Endothelial cell of umbilical vein (primary cell): ENCODE measurements at regions of chr19 and their contacts with region 1.

Region 1: DNA sequence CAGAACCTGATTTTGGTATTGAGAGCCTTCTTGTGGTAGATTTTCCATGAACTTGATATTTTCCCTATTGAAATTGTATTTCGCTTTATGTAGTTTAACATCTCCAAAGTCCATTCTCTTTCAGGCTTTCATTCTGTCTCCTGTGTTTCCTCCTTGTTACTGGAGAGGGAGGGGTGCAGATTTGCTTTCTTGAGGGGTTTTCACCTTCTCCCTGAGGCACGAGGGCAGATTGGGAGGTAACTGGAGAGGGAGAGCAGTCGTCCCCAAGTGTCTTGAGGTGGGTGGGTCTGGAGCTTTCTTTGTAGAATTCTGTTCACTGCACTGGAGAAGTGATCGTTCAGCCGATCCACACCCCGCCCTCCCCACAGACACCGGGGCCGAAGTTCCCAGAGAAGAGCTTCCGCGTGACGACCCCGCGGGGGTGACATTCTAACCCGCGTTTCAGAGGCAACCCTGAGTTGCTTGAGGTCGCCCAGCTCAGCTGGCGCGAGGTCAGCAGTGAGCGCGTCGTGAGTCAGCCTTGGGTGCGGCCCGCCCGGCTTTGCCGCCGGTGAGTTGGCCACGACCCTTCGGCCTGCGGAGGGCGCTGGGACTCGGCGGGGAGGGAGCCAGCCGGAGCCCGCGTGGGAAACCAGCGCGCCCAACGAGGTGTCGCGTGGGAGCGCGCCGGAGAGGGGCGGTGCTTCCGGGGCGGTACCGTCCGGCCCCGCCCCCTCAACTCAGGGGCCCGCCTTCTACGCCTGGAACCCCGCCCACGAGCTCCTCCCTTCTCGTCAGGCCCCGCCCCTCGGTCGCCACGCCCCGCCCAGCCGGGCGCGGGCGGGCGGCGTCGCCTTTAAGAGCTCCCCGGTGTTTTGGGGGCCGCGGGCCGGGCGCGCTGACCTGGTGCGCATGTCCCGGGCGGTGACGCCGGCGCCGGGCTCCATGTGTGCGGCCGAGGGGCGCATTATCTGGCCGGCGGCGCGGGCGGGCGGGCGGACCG is at the start of gene GATAD2A:
- DNase-seq: peak; percentile 88
- H3K4me3 ChIP-seq: peak within 1 kb of the TSS; percentile 79 to 85 (median 84)
- H3K27ac ChIP-seq: peak within 1 kb of the TSS; percentile 63
- H3K4me1 ChIP-seq: peaks cover 11% of the 10 kb centered on the region
- H3K27me3 ChIP-seq: no peaks in the 10 kb centered on the region
- CTCF ChIP-seq: peak; percentile 17 to 20
- POLR2A ChIP-seq: peak; percentile 51
- total RNA-seq, gene GATAD2A: 134 and 138 TPM in 2 replicates

Region 2: DNA sequence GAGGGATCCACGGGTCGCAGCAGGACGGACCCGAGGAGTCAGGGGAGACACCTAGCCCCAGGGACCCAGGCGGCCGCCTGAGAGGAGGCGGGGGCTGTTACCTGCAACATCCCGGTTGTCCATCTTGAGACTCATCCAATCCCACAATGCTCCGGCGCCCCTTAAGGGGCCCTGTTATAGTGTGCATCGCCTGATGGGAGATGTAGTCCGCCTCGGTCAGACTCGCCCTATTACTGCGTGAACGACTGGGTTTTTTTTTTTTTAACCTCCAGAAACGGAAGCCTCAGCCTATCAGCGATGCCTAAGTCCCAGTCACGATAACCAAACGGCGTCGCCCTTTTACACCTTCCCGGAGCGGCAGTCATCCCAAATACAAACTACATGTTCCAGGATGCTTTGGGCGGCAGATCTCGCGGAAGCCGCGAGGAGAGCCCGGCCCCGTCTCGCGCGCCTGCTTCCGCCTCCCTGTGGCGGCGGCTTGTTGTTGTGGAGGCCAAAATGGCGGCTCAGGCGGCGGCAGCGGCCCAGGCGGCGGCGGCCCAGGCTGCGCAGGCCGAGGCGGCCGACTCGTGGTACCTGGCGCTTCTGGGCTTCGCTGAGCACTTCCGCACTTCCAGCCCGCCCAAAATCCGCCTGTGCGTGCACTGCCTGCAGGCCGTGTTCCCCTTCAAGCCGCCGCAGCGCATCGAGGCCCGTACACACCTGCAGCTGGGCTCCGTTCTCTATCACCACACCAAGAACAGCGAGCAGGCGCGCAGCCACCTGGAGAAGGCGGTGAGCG is 84.6 kb before region 1 on chr19 and contains the starts of genes MAU2 and SUGP1:
- CTCF ChIA-PET with region 1: no interaction called
- POLR2A ChIA-PET with region 1: no interaction called
- dilution Hi-C with region 1: no loop called
- intact Hi-C with region 1: loop called (anchors 1 kb)
- DNase-seq: peak; percentile 89
- H3K4me3 ChIP-seq: peak within 1 kb of the TSS; percentile 69 to 90 (median 83)
- H3K27ac ChIP-seq: peak within 1 kb of the TSS; percentile 94
- H3K4me1 ChIP-seq: peaks cover 13% of the 10 kb centered on the region
- H3K27me3 ChIP-seq: no peaks in the 10 kb centered on the region
- CTCF ChIP-seq: no peak
- POLR2A ChIP-seq: peak; percentile 78
- total RNA-seq, gene MAU2: 57.3 and 70.0 TPM in 2 replicates
- total RNA-seq, gene SUGP1: 59.9 and 64.7 TPM in 2 replicates

Region 3: GRCh38 chr19:19361075-19361594 is 44.0 kb before region 1 on chr19:
- CTCF ChIA-PET with region 1: interaction called, 24 read pairs
- POLR2A ChIA-PET with region 1: interaction called, 3 read pairs
- dilution Hi-C with region 1: no loop called
- intact Hi-C with region 1: no loop called
- DNase-seq: peak; percentile 85
- H3K4me3 ChIP-seq: no peak overlapping the region
- H3K27ac ChIP-seq: no peak overlapping the region
- H3K4me1 ChIP-seq: peaks cover 8% of the 10 kb centered on the region
- H3K27me3 ChIP-seq: no peaks in the 10 kb centered on the region
- CTCF ChIP-seq: peak; percentile 76 to 77
- POLR2A ChIP-seq: no peak

Region 4: DNA sequence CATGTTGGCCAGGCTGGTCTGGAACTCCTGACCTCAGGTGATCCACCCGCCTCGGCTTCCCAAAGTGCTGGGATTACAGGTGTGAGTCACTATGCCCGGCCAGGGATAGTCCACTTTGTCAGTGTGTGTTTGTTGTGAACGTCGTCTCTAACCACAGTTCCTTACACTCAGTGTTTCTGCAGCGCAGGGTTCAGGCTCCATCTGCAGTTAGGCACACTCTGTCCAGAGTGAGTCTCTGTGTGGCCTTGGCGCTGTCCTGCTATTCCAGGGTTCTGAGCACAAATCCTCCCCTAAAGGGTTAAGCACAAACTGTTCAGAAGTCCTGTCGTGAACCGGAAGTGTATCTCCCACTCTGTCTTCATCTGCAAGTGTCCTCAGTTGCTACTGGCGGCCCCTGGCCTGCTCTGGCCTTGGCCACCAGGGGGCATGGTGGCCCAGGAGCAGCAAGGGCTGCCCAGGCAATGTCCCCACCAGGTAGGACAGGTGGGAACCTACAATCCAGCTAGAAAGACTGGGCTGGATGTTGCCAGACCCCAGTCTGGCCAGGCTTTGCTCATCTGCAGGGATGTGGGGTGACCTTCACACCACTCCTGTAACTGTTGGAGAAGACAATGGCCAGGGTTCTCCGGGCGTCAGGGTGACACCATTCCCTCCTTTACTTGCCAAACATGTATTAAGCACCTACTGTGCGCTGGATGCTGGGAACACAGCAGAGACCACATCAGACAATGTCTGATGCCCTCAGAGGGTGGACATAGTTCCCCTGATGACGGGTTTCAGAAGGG is 38.4 kb before region 1 on chr19:
- CTCF ChIA-PET with region 1: interaction called, 24 read pairs
- POLR2A ChIA-PET with region 1: interaction called, 3 read pairs
- dilution Hi-C with region 1: no loop called
- intact Hi-C with region 1: loop called (anchors 1 kb)
- DNase-seq: peak; percentile 67
- H3K4me3 ChIP-seq: no peak overlapping the region
- H3K27ac ChIP-seq: no peak overlapping the region
- H3K4me1 ChIP-seq: peaks cover 8% of the 10 kb centered on the region
- H3K27me3 ChIP-seq: no peaks in the 10 kb centered on the region
- CTCF ChIP-seq: peak; percentile 96 to 98
- POLR2A ChIP-seq: no peak

Region 5: DNA sequence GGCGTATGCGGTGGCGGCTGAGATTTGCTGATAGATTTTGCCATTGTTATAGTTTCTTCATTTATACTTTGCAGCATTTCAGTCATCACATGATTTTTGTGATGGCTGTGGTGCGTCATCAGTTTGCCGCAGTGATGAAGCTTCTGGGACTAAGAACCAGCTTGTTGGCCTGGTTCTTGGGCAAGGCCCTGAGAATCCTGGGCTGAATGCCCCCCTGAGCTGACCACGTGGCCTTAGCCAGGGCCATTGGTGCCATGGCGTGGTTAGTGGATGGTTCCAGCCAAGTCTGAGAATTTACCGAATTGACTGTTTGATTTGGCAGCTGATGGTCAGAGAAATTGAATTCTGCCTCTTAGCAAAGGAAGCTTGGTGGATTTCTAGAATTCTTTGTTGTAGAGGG is 18.2 kb after region 1 on chr19:
- CTCF ChIA-PET with region 1: no interaction called
- POLR2A ChIA-PET with region 1: no interaction called
- dilution Hi-C with region 1: no loop called
- intact Hi-C with region 1: no loop called
- DNase-seq: no peak
- H3K4me3 ChIP-seq: no peak overlapping the region
- H3K27ac ChIP-seq: no peak overlapping the region
- H3K4me1 ChIP-seq: no peaks in the 10 kb centered on the region
- H3K27me3 ChIP-seq: no peaks in the 10 kb centered on the region
- CTCF ChIP-seq: no peak
- POLR2A ChIP-seq: no peak

Region 6: GRCh38 chr19:19459707-19460251 is 54.6 kb after region 1 on chr19:
- CTCF ChIA-PET with region 1: interaction called, 6 read pairs
- POLR2A ChIA-PET with region 1: interaction called, 5 read pairs
- dilution Hi-C with region 1: no loop called
- intact Hi-C with region 1: loop called (anchors 2 kb)
- DNase-seq: peak; percentile 73
- H3K4me3 ChIP-seq: peak overlapping the region in 1 of 3 experiments; percentile 6
- H3K27ac ChIP-seq: peak overlapping the region; percentile 91
- H3K4me1 ChIP-seq: peaks cover 67% of the 10 kb centered on the region
- H3K27me3 ChIP-seq: no peaks in the 10 kb centered on the region
- CTCF ChIP-seq: no peak
- POLR2A ChIP-seq: peak; percentile 22